ENCODE measurements at regions of chr1 and their contacts with region 1.

Region 1: DNA sequence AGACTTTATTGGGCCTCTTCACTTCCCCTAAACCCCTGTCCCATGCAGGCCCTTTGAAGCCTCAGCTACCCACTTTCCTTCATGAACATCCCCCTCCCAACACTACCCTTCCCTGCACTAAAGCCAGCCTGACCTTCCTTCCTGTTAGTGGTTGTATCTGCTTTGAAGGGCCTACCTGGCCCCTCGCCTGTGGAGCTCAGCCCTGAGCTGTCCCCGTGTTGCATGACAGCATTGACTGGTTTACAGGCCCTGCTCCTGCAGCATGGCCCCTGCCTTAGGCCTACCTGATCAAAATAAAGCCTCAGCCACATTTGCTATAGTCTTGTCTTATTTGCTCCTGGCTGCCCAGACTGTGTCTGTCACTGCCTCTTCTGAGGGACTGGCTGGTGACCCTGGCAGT is 5.5 kb downstream of the GSTM4 start:
- DNase-seq: no peak
- H3K4me3 ChIP-seq: no peak overlapping the region
- H3K27me3 ChIP-seq: no peaks in the 10 kb centered on the region
- CTCF ChIP-seq: no peak

Region 2: GRCh38 chr1:109649491-109649914 is 11.9 kb before region 1 on chr1:
- CTCF ChIA-PET with region 1: interaction called, 10 read pairs
- POLR2A ChIA-PET with region 1: no interaction called
- DNase-seq: no peak
- H3K4me3 ChIP-seq: peak overlapping the region; percentile 34
- H3K27me3 ChIP-seq: peaks cover 2% of the 10 kb centered on the region; the same call in 1 of the 2 replicates
- CTCF ChIP-seq: peak; percentile 60

Measured in BJ (cell line).